Naive thymus-derived CD4-positive, alpha-beta T cell (primary cell): ENCODE measurements at regions of chr19 and their contacts with region 1.

Region 1: DNA sequence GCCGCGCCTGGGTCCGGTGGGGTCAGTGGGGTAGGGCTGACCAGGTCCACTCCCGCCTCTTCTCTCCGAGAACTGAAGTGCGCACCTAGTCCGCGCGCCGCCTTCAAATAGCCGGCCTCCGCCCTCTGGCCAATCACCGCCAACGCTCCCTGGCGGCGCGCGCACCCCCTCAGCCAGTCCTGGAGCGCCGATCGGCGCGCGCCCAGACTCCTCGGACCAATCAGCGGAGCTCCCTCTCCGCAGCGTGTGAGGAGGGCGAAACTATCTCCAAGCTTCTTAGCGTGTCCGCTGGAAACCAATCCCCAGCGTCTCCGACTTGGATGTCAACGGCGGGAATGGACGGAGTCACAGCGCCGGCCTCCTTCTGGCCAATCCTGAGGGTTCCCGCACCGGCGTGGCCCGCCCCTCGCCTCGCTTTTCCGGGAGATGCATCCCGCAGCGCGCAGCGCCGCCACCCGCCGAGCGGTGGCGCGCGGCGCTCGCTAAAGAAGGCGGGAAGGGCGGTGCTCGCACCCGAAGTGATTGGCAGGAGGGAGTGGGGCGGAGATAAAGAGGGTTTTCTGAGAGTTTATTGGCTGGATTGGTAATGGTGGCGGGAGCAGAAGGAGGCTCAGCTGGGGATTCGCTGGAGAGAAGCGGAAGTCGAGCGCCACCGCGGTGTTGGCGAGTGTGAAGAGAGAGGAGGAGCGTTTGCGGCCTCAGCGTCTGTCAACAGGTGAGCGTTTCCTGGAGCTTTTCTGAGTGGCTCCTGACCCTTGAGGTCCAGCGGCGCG is at the start of gene ASF1B:
- DNase-seq: peak; percentile 94 to 99 (median 99)
- ATAC-seq: peak; percentile 88
- H3K4me3 ChIP-seq: peak within 1 kb of the TSS; percentile 87
- H3K4me3 Mint-ChIP-seq: peak within 1 kb of the TSS; percentile 84 to 97 (median 88)
- H3K27ac ChIP-seq: peak within 1 kb of the TSS; percentile 90
- H3K27ac Mint-ChIP-seq: peak within 1 kb of the TSS; percentile 88 to 97 (median 93)
- H3K4me1 ChIP-seq: peaks cover 8 to 15% of the 10 kb centered on the region in 2 donors
- H3K4me1 Mint-ChIP-seq: peaks cover 0 to 43% (median 34%) of the 10 kb centered on the region in 7 donors
- H3K27me3 ChIP-seq: no peaks in the 10 kb centered on the region
- H3K27me3 Mint-ChIP-seq: no peaks in the 10 kb centered on the region
- total RNA-seq, gene ASF1B: 0.98 to 79.0 (median 2.1) TPM

Region 2: GRCh38 chr19:13880059-13881043 is 256.3 kb before region 1 on chr19:
- CTCF ChIA-PET with region 1: interaction called, 4 read pairs
- POLR2A ChIA-PET with region 1: interaction called, 4 read pairs
- intact Hi-C with region 1: loop called (anchors 1 kb)
- DNase-seq: peak; percentile 89 to 99 (median 93)
- ATAC-seq: peak; percentile 99
- H3K4me3 ChIP-seq: peak overlapping the region; percentile 49
- H3K4me3 Mint-ChIP-seq: peak overlapping the region; percentile 49 to 89 (median 66)
- H3K27ac ChIP-seq: peak overlapping the region; percentile 48
- H3K27ac Mint-ChIP-seq: peak overlapping the region in 8 of 9 donors; percentile 12 to 86 (median 70)
- H3K4me1 ChIP-seq: peaks cover 36 to 38% of the 10 kb centered on the region in 2 donors
- H3K4me1 Mint-ChIP-seq: peaks cover 6 to 43% (median 34%) of the 10 kb centered on the region in 7 donors
- H3K27me3 ChIP-seq: no peaks in the 10 kb centered on the region
- H3K27me3 Mint-ChIP-seq: no peaks in the 10 kb centered on the region

Region 3: DNA sequence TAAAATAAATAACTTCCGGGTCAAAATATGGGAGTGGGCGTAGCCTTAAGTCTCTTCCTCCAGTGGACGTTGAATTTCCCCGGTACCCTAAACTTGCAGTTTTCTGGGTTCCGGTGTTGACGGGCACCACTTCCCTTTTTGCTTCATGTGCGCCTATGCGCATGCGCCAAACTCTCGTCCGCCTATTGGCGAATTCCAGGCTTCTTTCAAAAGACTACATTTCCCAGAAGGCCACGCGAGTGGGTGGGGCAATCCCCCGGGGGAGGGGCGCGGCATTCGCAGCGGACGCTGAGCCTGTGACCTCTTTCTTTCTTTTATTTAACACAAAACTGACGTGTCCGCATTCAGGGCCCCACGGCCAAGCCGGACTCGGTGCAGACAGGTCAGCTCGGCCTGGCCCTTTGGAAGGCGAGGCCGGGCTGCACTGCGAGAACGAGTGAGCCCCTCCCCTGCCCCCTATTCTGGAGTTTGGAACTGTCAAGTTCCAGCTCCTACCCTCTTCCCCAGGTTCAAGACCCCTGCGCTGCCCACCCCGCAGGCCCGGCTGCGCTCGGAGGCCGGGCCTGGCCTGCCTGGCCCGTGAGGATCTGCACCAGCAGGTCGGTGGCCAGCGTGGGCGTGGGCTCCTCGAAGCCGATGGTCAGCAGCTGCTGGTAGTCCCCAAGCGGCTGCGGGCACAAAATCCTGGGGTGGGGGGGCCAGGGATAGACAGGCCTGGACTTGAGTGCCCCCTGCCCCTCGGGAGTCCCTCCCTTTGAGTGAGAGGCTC is 55.2 kb before region 1 on chr19:
- CTCF ChIA-PET with region 1: interaction called, 5 read pairs
- POLR2A ChIA-PET with region 1: interaction called, 24 read pairs
- intact Hi-C with region 1: loop called (anchors 1 to 2 kb)
- DNase-seq: peak; percentile 96 to 100 (median 99)
- ATAC-seq: peak; percentile 97
- H3K4me3 ChIP-seq: peak overlapping the region; percentile 86
- H3K4me3 Mint-ChIP-seq: peak overlapping the region; percentile 80 to 98 (median 94)
- H3K27ac ChIP-seq: peak overlapping the region; percentile 80
- H3K27ac Mint-ChIP-seq: peak overlapping the region; percentile 86 to 98 (median 95)
- H3K4me1 ChIP-seq: peaks cover 5 to 15% of the 10 kb centered on the region in 2 donors
- H3K4me1 Mint-ChIP-seq: peaks cover 0 to 27% (median 17%) of the 10 kb centered on the region in 7 donors
- H3K27me3 ChIP-seq: no peaks in the 10 kb centered on the region
- H3K27me3 Mint-ChIP-seq: no peaks in the 10 kb centered on the region

Region 4: DNA sequence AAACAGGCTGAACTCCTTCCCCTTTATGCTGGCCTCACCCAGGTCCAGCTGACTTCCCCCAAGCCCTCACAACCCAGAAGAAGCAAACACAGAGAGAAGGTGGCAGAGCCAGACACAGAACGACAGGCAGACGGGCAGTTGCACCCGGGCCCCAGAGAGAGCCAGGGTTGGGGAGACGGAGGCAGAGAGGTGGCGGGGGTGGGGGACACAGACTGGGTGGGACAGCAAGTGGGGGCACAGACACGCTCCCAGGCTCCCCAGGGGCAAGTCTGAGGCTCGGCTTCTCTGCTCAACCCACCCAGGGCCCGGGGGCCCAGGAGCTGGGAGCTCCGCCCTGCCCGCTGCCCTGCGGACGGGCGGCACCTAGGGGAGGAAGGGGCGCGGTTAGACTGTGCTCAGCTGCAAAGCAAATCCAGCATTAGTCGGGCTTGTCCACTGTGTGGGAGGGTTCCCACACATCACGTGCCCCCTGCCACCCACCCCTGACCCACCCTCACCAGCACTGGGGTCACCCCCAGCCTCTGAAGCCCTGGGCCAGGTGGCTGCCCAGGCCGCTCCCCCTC is 31.0 kb after region 1 on chr19:
- CTCF ChIA-PET with region 1: interaction called, 8 read pairs
- POLR2A ChIA-PET with region 1: interaction called, 11 read pairs
- intact Hi-C with region 1: loop called in 1 of 2 experiments (anchors 1 kb)
- DNase-seq: peak in 6 of 9 donors; percentile 15 to 49 (median 32)
- ATAC-seq: peak; percentile 80
- H3K4me3 ChIP-seq: peak overlapping the region; percentile 50
- H3K4me3 Mint-ChIP-seq: peak overlapping the region; percentile 75 to 97 (median 88)
- H3K27ac ChIP-seq: peak overlapping the region; percentile 68
- H3K27ac Mint-ChIP-seq: peak overlapping the region; percentile 77 to 97 (median 94)
- H3K4me1 ChIP-seq: peaks cover 11 to 15% of the 10 kb centered on the region in 2 donors
- H3K4me1 Mint-ChIP-seq: peaks cover 18 to 31% (median 26%) of the 10 kb centered on the region in 7 donors
- H3K27me3 ChIP-seq: no peaks in the 10 kb centered on the region
- H3K27me3 Mint-ChIP-seq: no peaks in the 10 kb centered on the region

Region 5: GRCh38 chr19:14405758-14406644 is 269.3 kb after region 1 on chr19:
- CTCF ChIA-PET with region 1: interaction called, 9 read pairs
- POLR2A ChIA-PET with region 1: interaction called, 5 read pairs
- intact Hi-C with region 1: loop called (anchors 1 kb)
- DNase-seq: peak; percentile 85 to 96 (median 91)
- ATAC-seq: peak; percentile 76
- H3K4me3 ChIP-seq: no peak overlapping the region
- H3K4me3 Mint-ChIP-seq: peak overlapping the region in 1 of 10 donors; percentile 12
- H3K27ac ChIP-seq: peak overlapping the region; percentile 54
- H3K27ac Mint-ChIP-seq: peak overlapping the region; percentile 58 to 85 (median 60)
- H3K4me1 ChIP-seq: peaks cover 8 to 25% of the 10 kb centered on the region in 2 donors
- H3K4me1 Mint-ChIP-seq: peaks cover 6 to 26% (median 20%) of the 10 kb centered on the region in 7 donors
- H3K27me3 ChIP-seq: no peaks in the 10 kb centered on the region
- H3K27me3 Mint-ChIP-seq: no peaks in the 10 kb centered on the region

Region 6: DNA sequence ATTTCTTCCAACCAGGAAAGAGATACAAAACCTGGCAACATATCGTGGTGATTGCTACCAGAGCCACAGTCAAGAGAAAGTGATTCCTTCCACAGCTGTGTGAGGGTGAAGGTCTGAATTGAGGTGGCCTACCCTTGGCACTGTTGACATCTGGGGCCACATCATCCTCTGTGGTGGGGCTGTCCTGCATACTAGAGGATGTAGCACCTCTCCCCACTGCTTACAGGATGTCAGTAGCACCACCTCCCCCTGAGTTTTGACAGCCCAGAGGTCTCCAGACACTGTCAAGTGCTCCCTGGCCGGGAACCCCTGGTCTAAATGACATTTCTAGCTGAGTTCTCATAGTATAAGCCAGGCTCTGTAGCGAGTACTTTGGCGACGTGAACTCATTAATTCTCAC is 323.0 kb after region 1 on chr19:
- CTCF ChIA-PET with region 1: no interaction called
- POLR2A ChIA-PET with region 1: no interaction called
- intact Hi-C with region 1: no loop called
- DNase-seq: no peak
- ATAC-seq: peak; percentile 96
- H3K4me3 ChIP-seq: no peak overlapping the region
- H3K4me3 Mint-ChIP-seq: no peak overlapping the region
- H3K27ac ChIP-seq: no peak overlapping the region
- H3K27ac Mint-ChIP-seq: peak overlapping the region in 4 of 9 donors; percentile 11 to 52 (median 40)
- H3K4me1 ChIP-seq: peaks cover 0 to 12% of the 10 kb centered on the region in 2 donors
- H3K4me1 Mint-ChIP-seq: peaks cover 0 to 14% (median 5%) of the 10 kb centered on the region in 7 donors
- H3K27me3 ChIP-seq: no peaks in the 10 kb centered on the region
- H3K27me3 Mint-ChIP-seq: no peaks in the 10 kb centered on the region

Region 7: DNA sequence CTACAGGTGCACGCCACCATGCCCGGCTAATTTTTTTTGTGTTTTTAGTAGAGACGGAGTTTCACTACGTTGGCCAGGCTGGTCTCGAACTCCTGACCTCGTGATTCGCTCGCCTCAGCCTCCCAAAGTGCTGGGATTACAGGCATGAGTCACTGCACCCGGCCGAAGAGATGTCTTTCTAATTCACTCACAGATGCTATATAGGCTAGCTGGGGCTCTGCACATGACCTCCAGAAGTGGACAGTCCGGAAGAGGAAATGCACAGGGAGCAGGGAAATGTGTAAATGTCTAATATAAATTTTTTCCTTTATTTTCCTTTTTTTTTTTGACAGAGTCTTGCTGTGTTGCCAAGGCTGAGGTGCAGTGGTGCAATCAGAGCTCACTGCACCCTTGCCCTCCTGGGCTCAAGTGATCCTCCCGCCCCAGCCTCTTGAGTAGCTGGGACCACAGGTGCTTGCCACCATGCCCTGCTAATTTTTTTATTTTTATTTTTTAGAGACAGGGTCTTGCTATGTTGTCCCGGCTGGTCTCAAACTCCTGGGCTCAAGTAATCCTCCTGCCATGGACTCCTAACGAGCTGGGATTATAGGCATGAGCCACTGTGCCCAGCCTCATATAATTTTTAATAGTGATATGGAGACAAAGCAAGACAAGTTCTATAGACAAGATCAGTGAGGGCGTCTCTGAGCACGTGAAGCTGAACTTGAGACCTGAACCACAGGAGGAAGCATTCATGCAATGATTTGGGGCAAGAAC is 350.9 kb after region 1 on chr19:
- CTCF ChIA-PET with region 1: interaction called, 11 read pairs
- POLR2A ChIA-PET with region 1: no interaction called
- intact Hi-C with region 1: no loop called
- DNase-seq: no peak
- ATAC-seq: no peak
- H3K4me3 ChIP-seq: no peak overlapping the region
- H3K4me3 Mint-ChIP-seq: no peak overlapping the region
- H3K27ac ChIP-seq: no peak overlapping the region
- H3K27ac Mint-ChIP-seq: peak overlapping the region in 1 of 9 donors; percentile 48
- H3K4me1 ChIP-seq: peaks cover 0 to 9% of the 10 kb centered on the region in 2 donors
- H3K4me1 Mint-ChIP-seq: peaks cover 5 to 12% (median 11%) of the 10 kb centered on the region in 7 donors
- H3K27me3 ChIP-seq: no peaks in the 10 kb centered on the region
- H3K27me3 Mint-ChIP-seq: no peaks in the 10 kb centered on the region